ENCODE measurements at regions of chr7 and their contacts with region 1.

Region 1: GRCh38 chr7:50528266-50529092 is 36.7 kb downstream of the DDC start:
- DNase-seq: peak; percentile 70 to 77
- H3K4me3 ChIP-seq: no peak overlapping the region
- H3K4me3 Mint-ChIP-seq: peak overlapping the region; percentile 60
- H3K27ac Mint-ChIP-seq: peak overlapping the region; percentile 93
- H3K4me1 ChIP-seq: peaks cover 52% of the 10 kb centered on the region
- H3K4me1 Mint-ChIP-seq: peaks cover 37% of the 10 kb centered on the region
- H3K27me3 ChIP-seq: no peaks in the 10 kb centered on the region
- H3K27me3 Mint-ChIP-seq: no peaks in the 10 kb centered on the region
- CTCF ChIP-seq: no peak

Region 2: GRCh38 chr7:50268223-50268622 is 260.3 kb before region 1 on chr7:
- CTCF ChIA-PET with region 1: no interaction called
- POLR2A ChIA-PET with region 1: no interaction called
- intact Hi-C with region 1: no loop called
- DNase-seq: no peak
- H3K4me3 ChIP-seq: no peak overlapping the region
- H3K4me3 Mint-ChIP-seq: no peak overlapping the region
- H3K27ac Mint-ChIP-seq: no peak overlapping the region
- H3K4me1 ChIP-seq: no peaks in the 10 kb centered on the region
- H3K4me1 Mint-ChIP-seq: no peaks in the 10 kb centered on the region
- H3K27me3 ChIP-seq: no peaks in the 10 kb centered on the region
- H3K27me3 Mint-ChIP-seq: peaks cover 24% of the 10 kb centered on the region
- CTCF ChIP-seq: no peak

Region 3: DNA sequence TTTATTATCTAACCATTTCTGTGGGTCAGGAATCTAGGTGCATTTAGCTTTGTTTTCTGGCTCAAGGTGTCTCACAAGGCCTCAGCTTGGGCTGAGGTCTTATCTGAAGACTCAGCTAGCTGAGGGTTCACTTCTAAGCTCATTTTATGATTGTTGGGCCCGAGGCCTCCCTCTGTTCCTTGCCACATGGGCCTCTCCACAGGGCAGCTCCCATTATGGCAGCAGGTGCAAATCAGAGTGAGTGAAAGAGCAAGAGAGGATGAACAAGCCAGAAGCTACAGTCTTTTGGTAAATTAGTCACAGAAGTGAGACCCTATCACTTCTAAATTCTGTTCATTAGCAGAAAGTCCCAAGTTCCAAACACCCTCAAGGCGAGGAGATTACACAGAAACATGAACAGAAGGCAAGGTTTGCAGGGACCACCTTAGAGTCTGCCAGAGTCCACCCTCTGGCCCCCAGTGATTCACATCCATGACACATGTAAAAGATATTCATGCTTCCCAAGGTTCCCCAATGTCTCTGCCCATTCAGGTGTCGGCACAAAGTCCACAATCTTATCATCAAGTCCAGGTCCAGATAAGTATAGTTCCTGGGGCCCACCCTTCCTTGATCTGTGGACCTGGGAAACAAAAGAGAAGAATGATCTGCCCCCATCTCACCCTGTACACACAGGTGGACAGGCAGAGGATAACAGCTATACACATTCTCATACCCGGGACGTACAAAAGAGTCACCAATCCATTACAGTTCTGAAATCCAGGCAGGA is 102.0 kb before region 1 on chr7:
- CTCF ChIA-PET with region 1: no interaction called
- POLR2A ChIA-PET with region 1: no interaction called
- intact Hi-C with region 1: loop called (anchors 5 kb)
- DNase-seq: peak; percentile 81 to 88
- H3K4me3 ChIP-seq: no peak overlapping the region
- H3K4me3 Mint-ChIP-seq: peak overlapping the region; percentile 25
- H3K27ac Mint-ChIP-seq: peak overlapping the region; percentile 78
- H3K4me1 ChIP-seq: peaks cover 30% of the 10 kb centered on the region
- H3K4me1 Mint-ChIP-seq: peaks cover 35% of the 10 kb centered on the region
- H3K27me3 ChIP-seq: no peaks in the 10 kb centered on the region
- H3K27me3 Mint-ChIP-seq: no peaks in the 10 kb centered on the region
- CTCF ChIP-seq: no peak

Region 4: DNA sequence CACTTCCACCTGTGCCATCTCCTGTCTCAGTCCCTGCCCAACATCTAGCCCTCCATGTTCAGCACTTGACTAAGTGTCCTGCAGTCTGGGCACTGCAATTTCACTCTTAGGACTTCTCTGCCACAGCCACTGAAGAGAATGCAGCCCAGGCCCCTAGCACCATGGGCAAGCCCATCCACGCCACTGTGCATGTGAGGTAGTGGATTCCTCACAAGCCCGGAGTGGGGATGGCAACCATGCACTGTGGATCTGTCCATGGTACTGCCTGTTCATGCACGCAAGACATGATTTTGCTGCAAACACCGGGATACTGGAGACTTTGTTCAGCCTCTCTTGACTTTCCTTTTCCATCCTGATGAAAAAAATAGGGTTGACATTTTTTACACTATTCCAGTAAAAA is 24.4 kb after region 1 on chr7:
- CTCF ChIA-PET with region 1: interaction called, 4 read pairs
- POLR2A ChIA-PET with region 1: no interaction called
- intact Hi-C with region 1: loop called (anchors 1 kb)
- DNase-seq: peak; percentile 59 to 63
- H3K4me3 ChIP-seq: no peak overlapping the region
- H3K4me3 Mint-ChIP-seq: peak overlapping the region; percentile 18
- H3K27ac Mint-ChIP-seq: no peak overlapping the region
- H3K4me1 ChIP-seq: peaks cover 61% of the 10 kb centered on the region
- H3K4me1 Mint-ChIP-seq: peaks cover 44% of the 10 kb centered on the region
- H3K27me3 ChIP-seq: no peaks in the 10 kb centered on the region
- H3K27me3 Mint-ChIP-seq: no peaks in the 10 kb centered on the region
- CTCF ChIP-seq: no peak

Region 5: GRCh38 chr7:50628434-50629084 is 100.1 kb after region 1 on chr7:
- CTCF ChIA-PET with region 1: no interaction called
- POLR2A ChIA-PET with region 1: no interaction called
- intact Hi-C with region 1: no loop called
- DNase-seq: no peak
- H3K4me3 ChIP-seq: no peak overlapping the region
- H3K4me3 Mint-ChIP-seq: no peak overlapping the region
- H3K27ac Mint-ChIP-seq: no peak overlapping the region
- H3K4me1 ChIP-seq: peaks cover 9% of the 10 kb centered on the region
- H3K4me1 Mint-ChIP-seq: peaks cover 13% of the 10 kb centered on the region
- H3K27me3 ChIP-seq: no peaks in the 10 kb centered on the region
- H3K27me3 Mint-ChIP-seq: no peaks in the 10 kb centered on the region
- CTCF ChIP-seq: peak in 1 of 2 experiments; percentile 47

Measured in Caco-2 (cell line).